ENCODE measurements at regions of chr14 and their contacts with region 1.

Region 1: DNA sequence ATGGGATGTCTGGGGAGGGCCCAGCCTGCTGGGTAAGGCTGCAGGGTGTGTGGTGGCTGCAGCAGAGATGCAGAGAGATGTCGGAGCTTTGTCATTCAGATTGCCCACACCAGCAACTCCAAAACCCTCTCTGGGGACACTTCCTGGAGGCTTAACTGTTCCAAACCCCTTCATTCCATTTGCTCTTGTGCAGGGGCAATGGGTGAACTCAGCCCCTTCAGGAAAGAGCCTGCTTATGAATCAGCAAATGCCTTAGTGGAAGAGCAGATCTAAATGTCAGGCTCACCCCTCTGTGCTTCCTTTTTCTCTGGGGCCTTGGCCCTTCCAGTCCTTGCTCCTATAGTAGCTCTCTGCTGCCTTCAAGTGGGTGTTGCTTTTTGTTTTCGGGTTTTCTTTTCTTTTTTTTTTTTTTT is 36.7 kb upstream of the GPATCH2L start:
- DNase-seq: no peak
- H3K4me3 ChIP-seq: no peak overlapping the region
- H3K27ac ChIP-seq: no peak overlapping the region
- H3K4me1 ChIP-seq: peaks cover 21 to 39% (median 25%) of the 10 kb centered on the region in 4 experiments
- H3K27me3 ChIP-seq: peaks cover 0 to 4% (median 3%) of the 10 kb centered on the region in 4 experiments; a peak in 2 of 7 replicates
- CTCF ChIP-seq: peak in 2 of 3 experiments; percentile 22 to 26; a peak in 2 of 4 replicates
- EP300 ChIP-seq: no peak
- POLR2A ChIP-seq: no peak
- RAD21 ChIP-seq: peak; percentile 43 to 55

Region 2: DNA sequence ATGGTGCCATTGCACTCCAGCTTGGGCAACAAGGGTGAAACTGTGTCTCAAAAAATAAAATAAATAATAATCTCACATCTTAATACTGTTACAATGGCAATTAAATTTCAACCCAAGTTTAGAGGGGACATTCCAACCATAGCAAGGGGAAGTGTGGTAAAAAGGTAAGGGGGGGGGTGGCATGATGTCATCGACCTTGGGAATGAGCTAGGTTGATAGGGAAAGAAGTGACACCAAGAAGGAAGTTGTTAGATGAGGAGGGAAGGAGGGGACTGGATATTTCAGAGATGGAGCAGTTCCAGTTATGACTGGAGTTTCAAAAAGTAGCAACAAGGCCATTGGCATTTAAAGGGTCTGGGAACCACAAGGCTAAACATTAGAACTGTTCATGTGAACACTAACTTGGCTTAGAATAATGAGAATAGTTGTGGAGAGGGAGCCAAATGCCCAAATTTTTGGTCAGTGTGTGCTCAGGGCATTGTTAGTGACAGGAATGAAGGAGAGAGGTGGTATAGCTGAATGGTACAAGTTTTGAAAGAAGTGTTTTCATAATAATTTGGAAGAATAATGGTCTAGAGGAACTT is 112.7 kb before region 1 on chr14:
- CTCF ChIA-PET with region 1: no interaction called
- POLR2A ChIA-PET with region 1: no interaction called
- DNase-seq: no peak
- H3K4me3 ChIP-seq: no peak overlapping the region
- H3K27ac ChIP-seq: no peak overlapping the region
- H3K4me1 ChIP-seq: no peaks in the 10 kb centered on the region
- H3K27me3 ChIP-seq: no peaks in the 10 kb centered on the region
- CTCF ChIP-seq: no peak
- EP300 ChIP-seq: no peak
- POLR2A ChIP-seq: no peak
- RAD21 ChIP-seq: no peak

Region 3: DNA sequence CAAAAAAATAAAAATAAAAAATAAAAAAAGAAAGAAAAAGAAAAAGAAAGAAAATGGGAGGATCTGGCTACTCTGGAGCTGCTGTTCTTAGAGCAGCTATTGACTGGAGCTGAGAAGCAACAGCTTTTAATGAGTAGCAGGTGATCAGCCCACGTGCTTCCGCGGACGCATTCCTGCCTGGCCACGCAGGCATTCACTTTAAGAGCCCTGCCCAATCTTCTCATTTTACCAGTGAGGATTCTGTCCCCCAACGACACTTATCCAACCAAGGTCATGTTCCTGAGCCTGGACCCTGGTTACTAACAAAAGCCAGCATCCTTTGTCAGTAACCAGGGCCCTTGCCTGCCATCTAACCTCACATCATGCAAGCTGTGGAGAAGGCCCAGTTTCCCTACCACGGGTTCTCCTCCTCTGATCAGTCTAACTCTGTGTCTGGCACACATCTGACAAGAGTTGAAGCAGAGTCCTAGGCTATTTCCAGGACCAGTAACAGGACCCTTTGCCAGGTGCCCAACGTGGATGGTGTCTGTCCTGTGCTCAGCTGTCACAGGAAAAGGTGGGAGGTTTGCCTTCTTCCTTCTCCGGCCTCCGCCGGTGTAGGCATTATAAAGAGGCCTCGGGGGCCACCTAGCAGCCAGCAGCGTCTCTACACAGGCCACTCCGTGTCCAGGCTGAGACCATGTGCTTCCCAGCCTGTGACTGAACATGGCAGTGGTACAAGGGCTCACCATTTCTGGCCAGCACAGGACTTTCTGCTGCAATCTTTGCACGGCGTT is 24.2 kb before region 1 on chr14:
- CTCF ChIA-PET with region 1: interaction called, 15 read pairs
- POLR2A ChIA-PET with region 1: interaction called, 5 read pairs
- DNase-seq: no peak
- H3K4me3 ChIP-seq: no peak overlapping the region
- H3K27ac ChIP-seq: no peak overlapping the region
- H3K4me1 ChIP-seq: peaks cover 0 to 13% (median 7%) of the 10 kb centered on the region in 4 experiments; a peak in 6 of 7 replicates
- H3K27me3 ChIP-seq: peaks cover 0 to under 1% (median 0%) of the 10 kb centered on the region in 4 experiments; a peak in 1 of 7 replicates
- CTCF ChIP-seq: no peak
- EP300 ChIP-seq: no peak
- POLR2A ChIP-seq: no peak
- RAD21 ChIP-seq: peak; percentile 21 to 40

Region 4: GRCh38 chr14:76101377-76102010 is 13.5 kb before region 1 on chr14:
- CTCF ChIA-PET with region 1: interaction called, 24 read pairs
- POLR2A ChIA-PET with region 1: interaction called, 4 read pairs
- DNase-seq: no peak
- H3K4me3 ChIP-seq: no peak overlapping the region
- H3K27ac ChIP-seq: no peak overlapping the region; the same call in 1 of the 2 replicates
- H3K4me1 ChIP-seq: peaks cover 0 to 5% (median 2%) of the 10 kb centered on the region in 4 experiments; a peak in 4 of 7 replicates
- H3K27me3 ChIP-seq: no peaks in the 10 kb centered on the region
- CTCF ChIP-seq: no peak
- EP300 ChIP-seq: no peak
- POLR2A ChIP-seq: no peak
- RAD21 ChIP-seq: no peak

Measured in H1 (cell line).